IMR-90 (cell line): ENCODE measurements at regions of chr3 and their contacts with region 1.

Region 1: GRCh38 chr3:24012589-24013269 is 67.6 kb downstream of the NR1D2 start:
- DNase-seq: no peak
- ATAC-seq: no peak
- H3K4me3 ChIP-seq: no peak overlapping the region
- H3K27ac ChIP-seq: no peak overlapping the region
- H3K4me1 ChIP-seq: peaks cover 2% of the 10 kb centered on the region
- H3K27me3 ChIP-seq: no peaks in the 10 kb centered on the region
- CTCF ChIP-seq: no peak
- POLR2A ChIP-seq: no peak
- RAD21 ChIP-seq: no peak

Region 2: GRCh38 chr3:24069045-24069444 is 56.3 kb after region 1 on chr3:
- CTCF ChIA-PET with region 1: no interaction called
- POLR2A ChIA-PET with region 1: no interaction called
- dilution Hi-C with region 1: no loop called
- in situ Hi-C with region 1: no loop called
- intact Hi-C with region 1: loop called (anchors 5 kb)
- DNase-seq: no peak
- ATAC-seq: no peak
- H3K4me3 ChIP-seq: no peak overlapping the region
- H3K27ac ChIP-seq: no peak overlapping the region
- H3K4me1 ChIP-seq: no peaks in the 10 kb centered on the region
- H3K27me3 ChIP-seq: no peaks in the 10 kb centered on the region
- CTCF ChIP-seq: 0 out of 2 replicates have a peak, but pooled peaks have one; percentile 2
- POLR2A ChIP-seq: no peak
- RAD21 ChIP-seq: 0 out of 2 replicates have a peak, but pooled peaks have one; percentile 9